Endothelial cell of umbilical vein (primary cell): ENCODE measurements at regions of chr2 and their contacts with region 1.

Region 1: DNA sequence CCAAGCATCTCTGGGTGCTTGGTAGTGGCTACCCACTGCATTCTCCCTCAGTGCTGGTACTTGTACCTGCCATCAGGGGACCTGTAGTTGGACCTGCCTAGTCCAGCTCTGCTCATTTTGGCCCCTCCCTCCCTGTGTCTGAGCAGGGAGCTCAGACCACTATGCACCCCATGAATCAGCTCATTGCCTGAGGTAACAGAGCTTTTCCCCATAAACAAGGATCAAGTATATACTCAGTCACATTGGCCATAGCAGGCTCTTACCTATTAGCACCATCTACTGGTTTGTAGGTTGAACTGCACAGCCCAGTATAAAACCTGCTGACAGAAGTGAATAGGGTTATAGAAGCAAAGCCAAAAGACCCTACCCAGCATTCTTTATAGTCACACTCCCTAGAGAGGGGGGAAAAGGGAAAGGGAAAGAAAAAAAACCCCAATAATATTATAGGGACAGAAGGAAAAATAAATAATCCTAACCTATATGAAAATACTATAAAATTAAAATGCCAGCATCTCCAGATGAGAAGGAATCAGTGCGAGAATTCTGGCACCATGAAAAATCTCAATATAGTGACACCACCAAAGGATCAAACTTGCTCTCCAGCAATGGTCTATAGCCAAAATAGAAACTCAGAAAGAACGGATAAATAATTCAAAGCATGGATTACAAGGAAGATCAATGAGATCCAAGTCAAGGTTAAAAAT is 6.9 kb upstream of the FLACC1 start:
- DNase-seq: peak; percentile 54
- H3K4me3 ChIP-seq: no peak overlapping the region
- H3K27ac ChIP-seq: no peak overlapping the region
- H3K4me1 ChIP-seq: no peaks in the 10 kb centered on the region
- H3K27me3 ChIP-seq: no peaks in the 10 kb centered on the region
- CTCF ChIP-seq: peak; percentile 66 to 78
- POLR2A ChIP-seq: no peak

Region 2: DNA sequence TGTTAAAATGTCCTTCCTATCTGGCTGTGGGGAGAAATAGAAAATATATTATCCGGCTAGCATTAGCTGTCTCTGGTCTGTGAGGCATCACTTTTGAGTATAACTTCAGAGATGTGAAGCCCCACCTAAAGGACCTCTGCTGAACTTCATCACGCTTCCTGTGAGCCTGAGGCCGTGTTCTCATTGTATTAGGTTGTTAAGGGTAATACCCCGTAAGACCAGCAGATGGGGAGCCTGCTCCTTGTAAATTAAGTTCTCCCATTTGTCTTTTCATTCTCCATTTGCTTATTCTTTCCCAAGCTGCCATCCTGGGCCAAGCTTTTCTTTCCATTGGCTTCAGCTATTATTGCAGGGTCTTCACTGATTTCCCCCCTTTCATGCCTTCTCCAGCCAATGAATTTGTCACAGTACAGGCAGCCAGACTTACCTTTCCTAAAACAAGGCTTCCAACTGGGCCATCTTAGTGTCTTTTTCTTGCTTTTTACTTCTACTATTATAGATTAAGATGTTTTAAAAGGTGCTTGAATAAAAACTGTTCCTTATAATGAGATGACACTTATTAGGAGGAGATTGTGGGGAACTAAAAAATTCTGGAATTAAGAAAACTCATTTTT is 462.4 kb before region 1 on chr2:
- CTCF ChIA-PET with region 1: interaction called, 3 read pairs
- POLR2A ChIA-PET with region 1: no interaction called
- dilution Hi-C with region 1: no loop called
- intact Hi-C with region 1: loop called (anchors 10 kb)
- DNase-seq: peak; percentile 91
- H3K4me3 ChIP-seq: no peak overlapping the region
- H3K27ac ChIP-seq: no peak overlapping the region
- H3K4me1 ChIP-seq: no peaks in the 10 kb centered on the region
- H3K27me3 ChIP-seq: no peaks in the 10 kb centered on the region
- CTCF ChIP-seq: peak; percentile 74 to 75
- POLR2A ChIP-seq: no peak

Region 3: GRCh38 chr2:201257956-201258665 is 105.9 kb before region 1 on chr2:
- CTCF ChIA-PET with region 1: interaction called, 17 read pairs
- POLR2A ChIA-PET with region 1: no interaction called
- dilution Hi-C with region 1: no loop called
- intact Hi-C with region 1: loop called (anchors 5 kb)
- DNase-seq: peak; percentile 84
- H3K4me3 ChIP-seq: peak overlapping the region; percentile 43 to 80 (median 78)
- H3K27ac ChIP-seq: peak overlapping the region; percentile 98
- H3K4me1 ChIP-seq: peaks cover 30% of the 10 kb centered on the region
- H3K27me3 ChIP-seq: no peaks in the 10 kb centered on the region
- CTCF ChIP-seq: no peak
- POLR2A ChIP-seq: peak; percentile 31

Region 4: DNA sequence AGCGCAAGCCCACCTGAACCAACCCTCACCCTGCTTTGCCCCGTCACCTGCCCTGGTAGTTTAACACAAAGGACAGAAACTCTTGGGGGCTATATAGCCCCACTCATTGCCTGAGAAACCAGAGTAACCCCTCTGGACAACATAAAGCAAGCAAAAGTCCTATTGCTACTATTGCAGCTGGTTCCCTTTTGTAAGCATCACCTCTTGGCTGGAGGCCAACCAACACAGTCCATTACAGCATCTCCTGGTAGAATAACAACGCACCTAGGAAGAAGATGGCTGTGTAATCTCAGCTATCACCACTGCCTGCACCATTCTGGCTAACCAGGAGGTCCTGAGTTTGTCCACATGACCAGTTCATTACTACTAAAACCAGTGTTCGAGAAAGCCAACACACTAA is 43.3 kb before region 1 on chr2:
- CTCF ChIA-PET with region 1: no interaction called
- POLR2A ChIA-PET with region 1: no interaction called
- dilution Hi-C with region 1: no loop called
- intact Hi-C with region 1: no loop called
- DNase-seq: no peak
- H3K4me3 ChIP-seq: no peak overlapping the region
- H3K27ac ChIP-seq: no peak overlapping the region
- H3K4me1 ChIP-seq: no peaks in the 10 kb centered on the region
- H3K27me3 ChIP-seq: no peaks in the 10 kb centered on the region
- CTCF ChIP-seq: no peak
- POLR2A ChIP-seq: no peak

Region 5: GRCh38 chr2:201350879-201351278 is 13.1 kb before region 1 on chr2:
- CTCF ChIA-PET with region 1: interaction called, 15 read pairs
- POLR2A ChIA-PET with region 1: no interaction called
- dilution Hi-C with region 1: no loop called
- intact Hi-C with region 1: no loop called
- DNase-seq: no peak
- H3K4me3 ChIP-seq: no peak overlapping the region
- H3K27ac ChIP-seq: no peak overlapping the region
- H3K4me1 ChIP-seq: no peaks in the 10 kb centered on the region
- H3K27me3 ChIP-seq: no peaks in the 10 kb centered on the region
- CTCF ChIP-seq: no peak
- POLR2A ChIP-seq: no peak

Region 6: DNA sequence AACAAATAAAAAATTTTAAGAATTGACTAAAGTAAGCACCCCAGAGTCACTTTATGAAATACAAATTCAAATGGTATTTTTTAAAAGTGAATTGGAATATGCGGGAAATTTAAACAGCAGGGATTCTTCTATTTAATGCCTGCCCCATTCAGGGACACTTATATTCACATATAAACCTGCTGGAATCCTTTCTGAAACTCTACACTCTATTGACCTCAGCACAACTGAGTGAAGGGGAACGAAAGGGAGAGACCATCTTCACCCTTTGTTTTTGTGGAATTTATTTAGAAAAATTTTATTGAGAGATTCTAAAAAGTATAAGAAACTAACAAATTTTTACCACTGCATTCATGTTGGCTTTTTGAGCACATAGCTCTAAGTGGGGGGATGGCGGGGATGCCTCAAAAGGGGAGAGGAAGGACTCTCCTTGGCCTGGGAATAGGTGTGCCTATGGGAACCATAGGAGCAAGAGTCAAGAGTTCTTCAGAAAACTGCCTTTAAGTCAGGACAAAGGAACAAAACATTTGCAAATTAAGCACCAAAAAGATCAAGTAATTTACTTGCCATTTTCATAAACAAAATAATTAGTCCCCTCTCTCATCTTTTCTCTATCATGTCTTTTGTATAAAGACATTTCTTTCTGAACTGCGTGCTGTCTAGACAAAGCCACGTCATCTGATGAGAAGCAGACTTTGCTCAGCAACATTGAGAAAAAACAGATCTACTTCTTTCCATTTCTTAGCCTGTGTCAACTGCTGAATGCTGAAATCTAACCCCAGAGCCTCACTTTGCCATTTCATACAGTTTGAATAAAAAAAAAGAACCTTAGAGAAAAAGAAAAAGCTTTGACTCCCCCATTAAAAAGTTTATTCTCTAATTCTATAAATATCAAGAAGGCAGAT is 14.7 kb after region 1 on chr2:
- CTCF ChIA-PET with region 1: interaction called, 11 read pairs
- POLR2A ChIA-PET with region 1: no interaction called
- dilution Hi-C with region 1: no loop called
- intact Hi-C with region 1: no loop called
- DNase-seq: no peak
- H3K4me3 ChIP-seq: no peak overlapping the region
- H3K27ac ChIP-seq: no peak overlapping the region
- H3K4me1 ChIP-seq: no peaks in the 10 kb centered on the region
- H3K27me3 ChIP-seq: no peaks in the 10 kb centered on the region
- CTCF ChIP-seq: no peak
- POLR2A ChIP-seq: no peak

Region 7: GRCh38 chr2:201458381-201458780 is 94.4 kb after region 1 on chr2:
- CTCF ChIA-PET with region 1: no interaction called
- POLR2A ChIA-PET with region 1: no interaction called
- dilution Hi-C with region 1: no loop called
- intact Hi-C with region 1: no loop called
- DNase-seq: no peak
- H3K4me3 ChIP-seq: no peak overlapping the region
- H3K27ac ChIP-seq: no peak overlapping the region
- H3K4me1 ChIP-seq: no peaks in the 10 kb centered on the region
- H3K27me3 ChIP-seq: no peaks in the 10 kb centered on the region
- CTCF ChIP-seq: no peak
- POLR2A ChIP-seq: no peak